Heart left ventricle (tissue), 16 donors: ENCODE measurements at regions of chr16 and their contacts with region 1.

Region 1: DNA sequence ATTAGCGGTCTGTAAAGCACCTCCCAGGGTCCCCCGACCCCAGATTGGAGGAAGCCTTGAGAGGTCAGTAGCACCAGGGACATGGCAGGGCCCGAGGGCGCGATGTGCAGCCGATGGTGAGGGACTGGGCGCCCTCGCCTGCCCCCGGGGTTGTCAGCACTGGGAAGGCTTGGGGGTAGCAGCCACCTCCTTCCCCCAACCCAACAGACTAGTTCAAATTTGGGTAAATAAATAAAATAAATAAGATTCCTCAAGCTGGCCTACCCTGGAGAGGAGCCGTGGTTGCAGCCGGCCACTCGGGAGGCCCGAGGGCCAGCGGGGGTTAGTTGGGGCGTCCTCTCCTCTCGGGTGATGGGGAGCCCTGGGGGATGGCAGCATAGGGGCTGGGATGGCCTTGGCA is 1.5 kb downstream of the C16orf92 start:
- DNase-seq: no peak
- ATAC-seq: no peak
- H3K4me3 ChIP-seq: no peak overlapping the region
- H3K27ac ChIP-seq: no peak overlapping the region
- H3K4me1 ChIP-seq: peaks cover 0 to 13% (median 4%) of the 10 kb centered on the region in 12 donors
- H3K27me3 ChIP-seq: peaks cover 0 to 38% (median 14%) of the 10 kb centered on the region in 9 donors
- CTCF ChIP-seq: no peak
- POLR2A ChIP-seq: no peak

Region 2: DNA sequence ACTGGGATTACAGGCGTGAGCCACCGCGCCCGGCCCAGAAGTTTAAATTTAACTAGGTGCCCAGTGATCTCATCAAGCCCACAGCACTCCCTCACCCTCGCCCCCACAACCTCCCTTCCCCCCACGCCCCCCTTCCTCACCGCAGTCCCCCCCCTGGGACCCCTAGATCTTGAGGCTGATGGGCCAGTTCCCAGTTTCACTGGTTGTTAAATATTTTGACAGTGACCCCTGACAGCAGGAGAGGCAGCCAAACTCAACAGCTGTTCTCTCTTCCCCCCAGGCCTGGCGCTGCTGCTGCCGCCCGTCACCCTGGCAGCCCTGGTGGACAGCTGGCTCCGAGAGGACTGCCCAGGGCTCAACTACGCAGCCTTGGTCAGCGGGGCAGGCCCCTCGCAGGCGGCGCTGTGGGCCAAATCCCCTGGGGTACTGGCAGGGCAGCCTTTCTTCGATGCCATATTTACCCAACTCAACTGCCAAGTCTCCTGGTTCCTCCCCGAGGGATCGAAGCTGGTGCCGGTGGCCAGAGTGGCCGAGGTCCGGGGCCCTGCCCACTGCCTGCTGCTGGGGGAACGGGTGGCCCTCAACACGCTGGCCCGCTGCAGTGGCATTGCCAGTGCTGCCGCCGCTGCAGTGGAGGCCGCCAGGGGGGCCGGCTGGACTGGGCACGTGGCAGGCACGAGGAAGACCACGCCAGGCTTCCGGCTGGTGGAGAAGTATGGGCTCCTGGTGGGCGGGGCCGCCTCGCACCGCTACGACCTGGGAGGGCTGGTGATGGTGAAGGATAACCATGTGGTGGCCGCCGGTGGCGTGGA is 329.9 kb before region 1 on chr16:
- intact Hi-C with region 1: loop called in 2 of 10 experiments (anchors 5 kb)
- DNase-seq: no peak
- ATAC-seq: no peak
- H3K4me3 ChIP-seq: no peak overlapping the region
- H3K27ac ChIP-seq: no peak overlapping the region
- H3K4me1 ChIP-seq: no peaks in the 10 kb centered on the region
- H3K27me3 ChIP-seq: no peaks in the 10 kb centered on the region
- CTCF ChIP-seq: no peak
- POLR2A ChIP-seq: no peak

Region 3: GRCh38 chr16:29719063-29719462 is 305.4 kb before region 1 on chr16:
- intact Hi-C with region 1: loop called in 1 of 10 experiments (anchors 5 kb)
- DNase-seq: no peak
- ATAC-seq: no peak
- H3K4me3 ChIP-seq: no peak overlapping the region
- H3K27ac ChIP-seq: no peak overlapping the region
- H3K4me1 ChIP-seq: no peaks in the 10 kb centered on the region
- H3K27me3 ChIP-seq: no peaks in the 10 kb centered on the region
- CTCF ChIP-seq: no peak
- POLR2A ChIP-seq: no peak